WTC11 (cell line): ENCODE measurements at regions of chr20 and their contacts with region 1.

Region 1: GRCh38 chr20:45362804-45363610 is at the start of gene SYS1:
- DNase-seq: peak; percentile 99
- ATAC-seq: peak; percentile 89
- H3K4me3 Mint-ChIP-seq: peak within 1 kb of the TSS; percentile 97
- H3K27ac Mint-ChIP-seq: peak within 1 kb of the TSS; percentile 98
- H3K4me1 Mint-ChIP-seq: peaks cover 25% of the 10 kb centered on the region
- H3K27me3 Mint-ChIP-seq: no peaks in the 10 kb centered on the region
- CTCF ChIP-seq: peak; percentile 77
- total RNA-seq, gene SYS1: 15.4 to 20.1 TPM (median 16.4 TPM) in 3 replicates

Region 2: GRCh38 chr20:45311589-45312211 is 51.3 kb before region 1 on chr20:
- CTCF ChIA-PET with region 1: interaction called, 31 read pairs
- POLR2A ChIA-PET with region 1: no interaction called
- DNase-seq: peak; percentile 92
- ATAC-seq: peak; percentile 68
- H3K4me3 Mint-ChIP-seq: peak overlapping the region; percentile 63
- H3K27ac Mint-ChIP-seq: no peak overlapping the region
- H3K4me1 Mint-ChIP-seq: peaks cover 15% of the 10 kb centered on the region
- H3K27me3 Mint-ChIP-seq: peaks cover 33% of the 10 kb centered on the region
- CTCF ChIP-seq: peak; percentile 71

Region 3: GRCh38 chr20:45341939-45342859 is 20.8 kb before region 1 on chr20:
- CTCF ChIA-PET with region 1: interaction called, 21 read pairs
- POLR2A ChIA-PET with region 1: interaction called, 11 read pairs
- DNase-seq: peak; percentile 82
- ATAC-seq: peak; percentile 72
- H3K4me3 Mint-ChIP-seq: peak overlapping the region; percentile 65
- H3K27ac Mint-ChIP-seq: peak overlapping the region; percentile 98
- H3K4me1 Mint-ChIP-seq: peaks cover 99% of the 10 kb centered on the region
- H3K27me3 Mint-ChIP-seq: no peaks in the 10 kb centered on the region
- CTCF ChIP-seq: no peak

Region 4: DNA sequence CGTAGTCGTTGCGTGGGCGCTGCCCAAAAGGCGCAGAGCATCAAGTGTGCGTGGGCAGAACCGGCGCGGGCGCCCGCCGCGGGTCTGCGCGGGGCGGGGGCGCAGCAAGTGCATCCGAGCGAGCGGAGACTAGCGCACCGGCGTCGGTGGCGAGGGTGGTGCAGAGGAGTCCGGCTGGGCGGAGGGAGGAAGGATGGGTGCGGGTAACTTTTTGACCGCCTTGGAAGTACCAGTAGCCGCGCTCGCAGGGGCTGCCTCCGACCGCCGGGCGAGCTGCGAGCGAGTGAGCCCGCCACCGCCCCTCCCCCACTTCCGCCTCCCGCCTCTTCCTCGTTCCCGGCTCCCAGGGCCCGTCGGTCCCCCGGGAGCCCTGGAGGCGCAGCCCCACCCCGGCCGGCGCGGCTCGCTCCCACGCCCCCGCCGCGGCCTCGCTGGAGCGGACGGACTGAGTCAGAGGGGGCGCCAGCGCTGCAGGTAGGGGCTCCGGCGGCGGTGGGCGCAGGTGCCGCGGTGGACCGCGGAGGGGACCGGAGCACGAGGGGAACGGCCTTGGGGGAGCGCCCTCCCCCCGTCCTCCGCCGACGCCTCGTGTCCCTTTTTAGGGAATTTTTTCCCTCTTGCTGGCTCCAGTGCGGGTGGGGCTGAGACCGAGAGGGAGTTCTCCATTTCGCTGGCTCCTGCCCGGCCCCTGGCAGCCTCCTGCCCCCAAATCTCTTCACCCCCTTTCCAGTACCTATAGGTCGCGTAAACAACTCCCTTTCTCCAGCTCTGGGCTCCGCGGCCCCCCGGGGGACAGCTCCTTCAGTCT is 43.5 kb after region 1 on chr20:
- CTCF ChIA-PET with region 1: interaction called, 13 read pairs
- POLR2A ChIA-PET with region 1: interaction called, 10 read pairs
- DNase-seq: peak; percentile 76
- ATAC-seq: peak; percentile 50
- H3K4me3 Mint-ChIP-seq: peak overlapping the region; percentile 84
- H3K27ac Mint-ChIP-seq: peak overlapping the region; percentile 86; the same call in 1 of the 2 replicates
- H3K4me1 Mint-ChIP-seq: peaks cover 12% of the 10 kb centered on the region
- H3K27me3 Mint-ChIP-seq: peaks cover 29% of the 10 kb centered on the region
- CTCF ChIP-seq: no peak

Region 5: DNA sequence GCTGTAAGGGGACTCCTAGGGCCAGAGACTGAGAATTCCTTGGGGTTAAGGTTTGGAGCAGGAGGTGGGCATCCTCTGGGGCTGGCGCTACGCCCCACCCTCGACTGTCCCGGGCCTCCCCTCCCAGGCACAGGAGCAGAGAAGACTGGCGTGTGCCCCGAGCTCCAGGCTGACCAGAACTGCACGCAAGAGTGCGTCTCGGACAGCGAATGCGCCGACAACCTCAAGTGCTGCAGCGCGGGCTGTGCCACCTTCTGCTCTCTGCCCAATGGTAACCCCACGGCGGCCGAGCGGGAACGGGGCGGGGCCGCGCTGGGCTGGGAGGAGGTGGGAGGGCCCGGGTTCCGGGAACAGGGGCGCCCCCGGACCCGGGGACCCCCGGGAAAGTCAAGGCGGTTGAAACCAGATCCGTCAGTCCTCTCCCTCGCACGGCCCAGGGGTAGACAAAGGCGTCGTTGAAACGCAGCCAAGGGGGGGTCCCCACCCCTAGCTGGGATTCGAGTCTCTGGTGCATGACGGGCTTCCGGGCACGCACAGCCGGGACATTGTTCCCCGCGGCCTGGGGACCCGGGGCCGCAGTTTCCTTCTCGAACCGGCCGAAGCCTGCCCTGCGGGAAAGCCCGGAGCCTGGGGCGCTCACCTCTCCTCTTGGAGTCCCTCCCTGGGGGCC is 107.4 kb after region 1 on chr20:
- CTCF ChIA-PET with region 1: interaction called, 10 read pairs
- POLR2A ChIA-PET with region 1: no interaction called
- DNase-seq: peak; percentile 69
- ATAC-seq: peak; percentile 63
- H3K4me3 Mint-ChIP-seq: peak overlapping the region; percentile 77
- H3K27ac Mint-ChIP-seq: peak overlapping the region; percentile 92
- H3K4me1 Mint-ChIP-seq: peaks cover 45% of the 10 kb centered on the region
- H3K27me3 Mint-ChIP-seq: peaks cover 7% of the 10 kb centered on the region
- CTCF ChIP-seq: no peak